Mammary epithelial cell (primary cell): ENCODE measurements at regions of chr6 and their contacts with region 1.

Region 1: GRCh38 chr6:5422321-5422915 is 161.1 kb downstream of the FARS2 start:
- DNase-seq: peak; percentile 14
- H3K4me3 ChIP-seq: no peak overlapping the region
- H3K27ac ChIP-seq: no peak overlapping the region
- H3K4me1 ChIP-seq: no peaks in the 10 kb centered on the region
- H3K27me3 ChIP-seq: no peaks in the 10 kb centered on the region
- CTCF ChIP-seq: peak; percentile 64 to 78

Region 2: DNA sequence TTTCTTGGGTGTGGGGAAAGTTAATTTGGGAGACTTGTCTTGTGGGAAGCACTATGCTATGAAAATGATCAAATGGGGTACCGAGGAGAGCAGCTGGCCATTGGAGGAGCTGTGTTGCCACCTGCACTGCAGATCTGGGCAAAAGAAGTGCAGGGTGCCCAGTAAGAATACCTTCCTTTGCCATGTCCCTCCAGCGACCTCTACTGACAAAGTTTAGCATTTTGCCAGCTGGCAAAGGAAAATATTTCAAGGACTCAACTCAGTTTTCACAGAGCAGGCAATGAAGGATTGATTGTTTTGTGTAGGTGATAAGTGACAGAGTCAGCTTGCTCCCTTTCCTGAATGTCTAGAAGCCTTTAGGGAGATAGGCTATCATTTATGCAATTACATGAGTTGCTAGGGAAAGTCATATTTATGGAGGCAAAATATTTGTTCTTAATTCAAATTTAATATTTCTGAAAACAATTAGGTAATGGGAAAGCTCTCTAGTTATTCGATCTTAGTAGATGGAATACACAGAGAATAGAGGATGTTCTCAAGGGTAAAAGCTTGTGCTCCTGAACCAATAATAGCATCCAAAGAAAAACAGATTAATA is 42.7 kb before region 1 on chr6:
- CTCF ChIA-PET with region 1: no interaction called
- dilution Hi-C with region 1: no loop called
- in situ Hi-C with region 1: no loop called
- intact Hi-C with region 1: no loop called
- DNase-seq: no peak
- H3K4me3 ChIP-seq: no peak overlapping the region
- H3K27ac ChIP-seq: no peak overlapping the region
- H3K4me1 ChIP-seq: no peaks in the 10 kb centered on the region
- H3K27me3 ChIP-seq: no peaks in the 10 kb centered on the region
- CTCF ChIP-seq: peak; percentile 62 to 77

Region 3: GRCh38 chr6:5968817-5969734 is 546.7 kb after region 1 on chr6:
- CTCF ChIA-PET with region 1: no interaction called
- dilution Hi-C with region 1: no loop called
- in situ Hi-C with region 1: no loop called
- intact Hi-C with region 1: loop called (anchors 1 kb)
- DNase-seq: peak; percentile 67
- H3K4me3 ChIP-seq: no peak overlapping the region
- H3K27ac ChIP-seq: no peak overlapping the region
- H3K4me1 ChIP-seq: peaks cover 18% of the 10 kb centered on the region
- H3K27me3 ChIP-seq: no peaks in the 10 kb centered on the region
- CTCF ChIP-seq: no peak

Region 4: DNA sequence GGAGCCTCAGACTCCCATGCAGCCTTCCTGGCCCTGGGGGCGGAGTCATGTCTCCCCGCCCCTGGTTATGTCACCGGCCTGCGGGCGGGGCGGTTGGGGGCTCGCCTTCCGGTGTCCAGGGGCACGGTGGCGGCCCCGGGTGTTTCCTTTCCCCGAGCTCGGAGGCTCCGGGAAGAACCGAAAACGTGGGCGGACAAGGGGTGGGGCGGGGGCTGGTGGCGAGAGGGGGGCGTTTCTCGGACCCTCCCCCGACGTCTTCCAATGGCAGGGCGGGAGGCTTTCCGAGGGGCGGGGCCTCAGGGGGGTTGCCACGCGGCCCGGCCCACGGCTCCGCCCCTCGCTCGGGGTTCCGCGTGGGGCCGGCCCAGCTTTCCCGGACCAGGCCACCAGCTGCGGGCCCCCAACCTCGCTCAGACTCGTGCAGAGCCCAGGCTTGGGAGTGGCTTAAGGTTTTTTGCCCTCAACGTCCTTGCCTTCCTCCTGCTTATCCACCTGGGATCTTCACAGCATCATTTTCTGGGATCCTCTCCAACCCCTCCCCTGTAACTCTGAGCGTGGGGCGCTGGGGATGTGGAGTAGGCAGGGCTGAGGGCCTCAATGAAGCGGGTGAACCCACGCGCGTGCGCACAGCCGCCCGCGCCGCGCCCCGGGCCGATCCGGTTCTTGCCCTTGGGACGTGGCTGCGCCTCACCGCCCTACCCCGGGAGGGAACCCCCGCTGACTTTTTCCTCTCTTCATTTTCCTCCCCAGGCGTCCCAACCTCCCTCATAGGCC is 586.4 kb after region 1 on chr6:
- CTCF ChIA-PET with region 1: no interaction called
- dilution Hi-C with region 1: no loop called
- in situ Hi-C with region 1: no loop called
- intact Hi-C with region 1: loop called (anchors 5 kb)
- DNase-seq: peak; percentile 80
- H3K4me3 ChIP-seq: peak overlapping the region in 2 of 3 experiments; percentile 2 to 25
- H3K27ac ChIP-seq: no peak overlapping the region
- H3K4me1 ChIP-seq: peaks cover 10% of the 10 kb centered on the region
- H3K27me3 ChIP-seq: peaks cover 55% of the 10 kb centered on the region
- CTCF ChIP-seq: no peak

Region 5: GRCh38 chr6:6057424-6058053 is 635.1 kb after region 1 on chr6:
- CTCF ChIA-PET with region 1: no interaction called
- dilution Hi-C with region 1: no loop called
- in situ Hi-C with region 1: no loop called
- intact Hi-C with region 1: loop called (anchors 5 kb)
- DNase-seq: peak; percentile 36
- H3K4me3 ChIP-seq: no peak overlapping the region
- H3K27ac ChIP-seq: no peak overlapping the region
- H3K4me1 ChIP-seq: no peaks in the 10 kb centered on the region
- H3K27me3 ChIP-seq: no peaks in the 10 kb centered on the region
- CTCF ChIP-seq: peak; percentile 62 to 65